ENCODE measurements at regions of chr2 and their contacts with region 1.

Region 1: GRCh38 chr2:231713730-231714430 is 5.6 kb downstream of the PTMA start:
- DNase-seq: peak; percentile 76
- CTCF ChIP-seq: peak; percentile 95

Region 2: DNA sequence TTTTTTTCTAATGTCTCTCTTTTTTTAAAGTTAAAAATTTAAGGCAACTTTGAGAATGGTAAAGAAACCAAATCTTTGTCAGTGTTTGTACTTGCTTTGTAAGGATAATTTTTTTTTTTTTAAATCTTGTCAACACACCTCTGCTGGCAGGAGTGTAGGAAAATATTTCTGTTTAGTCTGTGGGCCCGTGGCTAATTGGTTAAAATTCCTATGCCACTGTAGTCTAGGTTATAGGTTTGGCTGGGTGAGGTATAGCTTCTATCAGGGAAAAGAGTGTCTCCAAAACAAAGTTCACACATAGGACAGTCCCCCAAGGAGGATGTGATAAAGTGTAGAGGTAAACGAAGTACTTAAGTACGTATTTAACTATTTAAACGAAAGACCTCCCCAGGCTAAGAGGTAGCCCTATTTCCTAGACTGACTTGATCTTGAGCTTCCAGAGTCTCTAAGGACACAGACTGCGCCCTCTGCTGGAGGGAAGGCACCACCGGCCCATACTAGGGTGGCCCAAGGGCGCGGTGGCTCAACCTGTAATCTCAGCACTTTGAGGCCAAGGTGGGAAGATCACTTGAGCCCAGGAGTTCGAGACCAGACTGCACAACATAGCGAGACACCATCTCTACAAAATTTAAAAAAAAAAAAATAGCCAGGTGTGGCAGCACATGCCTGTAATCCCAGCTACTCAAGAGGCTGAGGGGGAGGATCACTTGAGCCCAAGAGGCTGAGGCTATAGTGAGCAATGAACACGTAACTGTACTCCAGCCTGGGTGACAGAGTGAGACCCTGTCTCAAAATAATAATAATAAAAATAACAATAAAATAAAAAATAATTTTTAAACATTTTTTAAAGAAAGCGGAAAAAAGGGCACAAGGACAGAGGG is 112.3 kb before region 1 on chr2:
- CTCF ChIA-PET with region 1: interaction called, 210 read pairs
- POLR2A ChIA-PET with region 1: interaction called, 5 read pairs
- DNase-seq: peak; percentile 81
- CTCF ChIP-seq: peak; percentile 90

Region 3: GRCh38 chr2:231642631-231643494 is 71.0 kb before region 1 on chr2:
- CTCF ChIA-PET with region 1: interaction called, 67 read pairs
- POLR2A ChIA-PET with region 1: no interaction called
- DNase-seq: peak; percentile 71
- CTCF ChIP-seq: no peak

Region 4: GRCh38 chr2:231662028-231662810 is 51.7 kb before region 1 on chr2:
- CTCF ChIA-PET with region 1: interaction called, 15 read pairs
- POLR2A ChIA-PET with region 1: no interaction called
- DNase-seq: peak; percentile 97
- CTCF ChIP-seq: no peak

Region 5: DNA sequence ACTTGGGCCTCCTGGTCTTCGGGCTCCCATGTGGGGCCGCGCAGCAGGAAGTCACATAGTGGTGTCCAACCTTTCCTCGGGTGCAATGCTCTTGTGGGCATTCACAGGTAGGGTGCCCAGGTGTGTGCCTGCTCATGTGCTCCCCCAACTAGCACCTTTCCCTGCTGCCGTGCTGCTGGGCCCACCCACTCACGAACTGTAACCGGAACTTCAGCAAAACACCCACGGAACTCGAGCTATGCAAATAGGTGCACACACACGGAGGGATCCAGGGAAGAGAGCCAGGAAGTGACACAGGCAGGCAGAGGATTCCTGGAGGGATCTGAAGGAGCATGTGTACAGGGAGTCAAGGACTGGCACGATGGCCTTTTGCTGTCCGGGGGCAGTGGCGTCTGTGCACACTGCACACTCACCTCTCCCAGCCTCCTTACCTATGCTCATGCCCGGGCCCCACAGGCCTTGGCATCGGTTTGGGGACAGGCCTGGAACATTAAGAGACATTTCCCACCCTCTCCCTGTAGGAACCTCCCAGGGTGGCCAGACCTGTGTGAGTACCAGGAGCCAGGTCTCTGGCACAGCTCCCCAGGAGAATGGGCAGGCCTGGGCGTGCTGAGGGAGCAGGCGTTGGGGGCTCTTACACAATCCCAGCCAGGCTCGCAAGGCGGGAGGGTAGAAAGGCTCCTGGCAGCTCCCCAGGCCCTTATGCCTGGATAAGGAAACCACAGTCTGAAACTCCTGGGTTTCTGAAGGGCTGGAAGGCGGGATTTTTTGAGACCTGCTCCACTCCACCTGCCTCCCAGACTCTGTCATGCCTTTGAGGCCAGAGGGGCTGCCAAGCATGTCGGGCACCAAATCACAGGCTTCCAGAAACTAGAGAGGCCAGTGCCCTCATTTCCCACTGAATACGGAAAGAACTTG is 12.2 kb before region 1 on chr2:
- CTCF ChIA-PET with region 1: interaction called, 56 read pairs
- POLR2A ChIA-PET with region 1: interaction called, 5 read pairs
- DNase-seq: no peak
- CTCF ChIP-seq: no peak

Region 6: GRCh38 chr2:231786177-231786916 is 72.5 kb after region 1 on chr2 and contains the start of gene COPS7B:
- CTCF ChIA-PET with region 1: interaction called, 12 read pairs
- POLR2A ChIA-PET with region 1: no interaction called
- DNase-seq: peak; percentile 86
- CTCF ChIP-seq: peak; percentile 52

Measured in GM10248 (cell line).